GM12878 (cell line): ENCODE measurements at regions of chr5 and their contacts with region 1.

Region 1: DNA sequence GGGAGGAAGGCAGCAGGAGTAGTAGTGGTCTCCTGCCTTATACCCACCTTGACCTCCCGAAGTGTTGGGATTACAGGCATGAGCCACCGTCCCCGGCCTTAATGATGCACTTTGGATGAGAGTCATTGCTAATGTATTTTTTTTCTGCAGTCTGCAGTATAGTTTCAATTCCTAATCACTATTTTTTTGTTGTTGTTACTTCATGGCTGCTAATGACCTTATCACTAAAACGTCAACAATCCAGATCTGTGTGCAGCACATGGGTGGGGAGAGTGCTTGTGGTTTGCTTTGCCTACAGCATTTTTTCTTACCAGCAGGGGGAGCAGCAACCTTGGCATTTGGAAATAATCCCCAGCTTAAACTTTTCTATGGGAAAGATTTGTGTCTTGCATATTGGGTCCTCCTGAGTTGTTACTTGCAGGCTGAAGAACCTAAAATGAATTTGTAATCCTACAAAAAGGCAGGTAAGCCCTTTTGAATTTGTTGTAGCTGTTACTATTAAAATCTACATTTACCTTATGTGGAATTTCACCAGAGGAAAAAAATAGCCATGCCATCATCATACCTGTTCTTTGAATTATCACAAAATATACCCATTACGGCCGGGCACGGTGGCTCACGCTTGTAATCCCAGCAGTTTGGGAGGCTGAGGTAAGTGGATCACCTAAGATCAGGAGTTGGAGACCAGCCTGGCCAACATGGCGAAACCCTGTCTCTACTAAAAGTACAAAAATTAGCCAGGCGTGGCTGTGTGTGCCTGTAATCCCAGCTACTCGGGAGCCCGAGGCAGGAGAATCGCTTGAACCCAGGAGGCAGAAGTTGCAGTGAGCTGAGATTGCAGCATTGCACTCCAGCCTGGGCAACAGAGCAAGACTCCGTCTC is 6.3 kb upstream of the MED7 start:
- DNase-seq: peak; percentile 40
- ATAC-seq: peak; percentile 92
- H3K4me3 ChIP-seq: no peak overlapping the region
- H3K27ac ChIP-seq: no peak overlapping the region
- H3K4me1 ChIP-seq: no peaks in the 10 kb centered on the region
- H3K27me3 ChIP-seq: no peaks in the 10 kb centered on the region
- CTCF ChIP-seq: peak; percentile 73 to 91 (median 90)
- EP300 ChIP-seq: no peak
- POLR2A ChIP-seq: no peak
- RAD21 ChIP-seq: peak; percentile 99

Region 2: GRCh38 chr5:156851880-156852279 is 297.1 kb before region 1 on chr5:
- CTCF ChIA-PET with region 1: no interaction called
- POLR2A ChIA-PET with region 1: no interaction called
- RAD21 ChIA-PET with region 1: no interaction called
- SMC1A ChIA-PET with region 1: no interaction called
- in situ Hi-C with region 1: no loop called
- intact Hi-C with region 1: no loop called
- DNase-seq: no peak
- ATAC-seq: no peak
- H3K4me3 ChIP-seq: no peak overlapping the region
- H3K27ac ChIP-seq: no peak overlapping the region
- H3K4me1 ChIP-seq: no peaks in the 10 kb centered on the region
- H3K27me3 ChIP-seq: no peaks in the 10 kb centered on the region
- CTCF ChIP-seq: no peak
- EP300 ChIP-seq: no peak
- POLR2A ChIP-seq: no peak
- RAD21 ChIP-seq: no peak

Region 3: DNA sequence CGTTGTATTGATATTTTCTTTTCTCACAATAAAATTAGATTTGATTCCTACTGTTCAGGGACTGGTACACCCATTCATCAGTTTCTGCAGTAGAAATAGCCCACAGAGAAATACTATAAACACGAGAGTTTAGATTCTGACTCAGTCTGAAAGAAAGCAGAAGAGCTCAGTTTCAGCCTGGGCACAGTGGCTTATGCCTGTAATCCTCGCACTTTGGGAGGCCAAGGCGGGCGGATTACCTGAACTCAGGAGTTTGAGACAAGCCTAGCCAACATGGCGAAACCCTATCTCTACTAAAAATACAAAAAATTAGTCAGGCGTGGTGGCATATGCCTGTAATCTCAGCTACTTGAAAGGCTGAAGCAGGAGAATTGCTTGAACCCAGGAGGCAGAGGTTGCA is 40.2 kb after region 1 on chr5:
- CTCF ChIA-PET with region 1: interaction called, 4 read pairs
- POLR2A ChIA-PET with region 1: no interaction called
- RAD21 ChIA-PET with region 1: interaction called, 3 read pairs
- SMC1A ChIA-PET with region 1: interaction called, 10 read pairs
- in situ Hi-C with region 1: no loop called
- intact Hi-C with region 1: no loop called
- DNase-seq: no peak
- ATAC-seq: peak; percentile 98
- H3K4me3 ChIP-seq: no peak overlapping the region
- H3K27ac ChIP-seq: no peak overlapping the region
- H3K4me1 ChIP-seq: 0 out of 2 replicates have a peak, but pooled peaks cover 6% of the 10 kb centered on the region
- H3K27me3 ChIP-seq: no peaks in the 10 kb centered on the region
- CTCF ChIP-seq: no peak
- EP300 ChIP-seq: no peak
- POLR2A ChIP-seq: no peak
- RAD21 ChIP-seq: no peak

Region 4: GRCh38 chr5:157225469-157226422 is 76.8 kb after region 1 on chr5:
- CTCF ChIA-PET with region 1: interaction called, 18 read pairs
- POLR2A ChIA-PET with region 1: interaction called, 5 read pairs
- RAD21 ChIA-PET with region 1: interaction called, 5 read pairs
- SMC1A ChIA-PET with region 1: interaction called, 13 read pairs
- in situ Hi-C with region 1: no loop called
- intact Hi-C with region 1: no loop called
- DNase-seq: no peak
- ATAC-seq: peak; percentile 61
- H3K4me3 ChIP-seq: no peak overlapping the region
- H3K27ac ChIP-seq: no peak overlapping the region
- H3K4me1 ChIP-seq: peaks cover 8% of the 10 kb centered on the region
- H3K27me3 ChIP-seq: no peaks in the 10 kb centered on the region
- CTCF ChIP-seq: no peak
- EP300 ChIP-seq: no peak
- POLR2A ChIP-seq: no peak
- RAD21 ChIP-seq: no peak

Region 5: GRCh38 chr5:157265714-157266285 is 116.8 kb after region 1 on chr5 and contains the start of gene CYFIP2:
- CTCF ChIA-PET with region 1: interaction called, 22 read pairs
- POLR2A ChIA-PET with region 1: interaction called, 4 read pairs
- RAD21 ChIA-PET with region 1: interaction called, 12 read pairs
- SMC1A ChIA-PET with region 1: interaction called, 7 read pairs
- in situ Hi-C with region 1: no loop called
- intact Hi-C with region 1: loop called (anchors 5 kb)
- DNase-seq: no peak
- ATAC-seq: peak; percentile 87
- H3K4me3 ChIP-seq: peak within 1 kb of the TSS; percentile 91
- H3K27ac ChIP-seq: peak within 1 kb of the TSS; percentile 83
- H3K4me1 ChIP-seq: peaks cover 37% of the 10 kb centered on the region
- H3K27me3 ChIP-seq: no peaks in the 10 kb centered on the region
- CTCF ChIP-seq: no peak
- EP300 ChIP-seq: no peak
- POLR2A ChIP-seq: peak; percentile 80
- RAD21 ChIP-seq: no peak
- polyA plus RNA-seq, gene CYFIP2: 43.4 to 68.6 TPM

Region 6: GRCh38 chr5:157328277-157328912 is 179.4 kb after region 1 on chr5:
- CTCF ChIA-PET with region 1: interaction called, 23 read pairs
- POLR2A ChIA-PET with region 1: interaction called, 3 read pairs
- RAD21 ChIA-PET with region 1: interaction called, 7 read pairs
- SMC1A ChIA-PET with region 1: interaction called, 23 read pairs
- in situ Hi-C with region 1: no loop called
- intact Hi-C with region 1: no loop called
- DNase-seq: no peak
- ATAC-seq: peak; percentile 100
- H3K4me3 ChIP-seq: no peak overlapping the region
- H3K27ac ChIP-seq: no peak overlapping the region
- H3K4me1 ChIP-seq: no peaks in the 10 kb centered on the region
- H3K27me3 ChIP-seq: no peaks in the 10 kb centered on the region
- CTCF ChIP-seq: peak; percentile 85 to 94 (median 91)
- EP300 ChIP-seq: no peak
- POLR2A ChIP-seq: no peak
- RAD21 ChIP-seq: peak; percentile 85